ENCODE measurements at regions of chr3 and their contacts with region 1.

Region 1: DNA sequence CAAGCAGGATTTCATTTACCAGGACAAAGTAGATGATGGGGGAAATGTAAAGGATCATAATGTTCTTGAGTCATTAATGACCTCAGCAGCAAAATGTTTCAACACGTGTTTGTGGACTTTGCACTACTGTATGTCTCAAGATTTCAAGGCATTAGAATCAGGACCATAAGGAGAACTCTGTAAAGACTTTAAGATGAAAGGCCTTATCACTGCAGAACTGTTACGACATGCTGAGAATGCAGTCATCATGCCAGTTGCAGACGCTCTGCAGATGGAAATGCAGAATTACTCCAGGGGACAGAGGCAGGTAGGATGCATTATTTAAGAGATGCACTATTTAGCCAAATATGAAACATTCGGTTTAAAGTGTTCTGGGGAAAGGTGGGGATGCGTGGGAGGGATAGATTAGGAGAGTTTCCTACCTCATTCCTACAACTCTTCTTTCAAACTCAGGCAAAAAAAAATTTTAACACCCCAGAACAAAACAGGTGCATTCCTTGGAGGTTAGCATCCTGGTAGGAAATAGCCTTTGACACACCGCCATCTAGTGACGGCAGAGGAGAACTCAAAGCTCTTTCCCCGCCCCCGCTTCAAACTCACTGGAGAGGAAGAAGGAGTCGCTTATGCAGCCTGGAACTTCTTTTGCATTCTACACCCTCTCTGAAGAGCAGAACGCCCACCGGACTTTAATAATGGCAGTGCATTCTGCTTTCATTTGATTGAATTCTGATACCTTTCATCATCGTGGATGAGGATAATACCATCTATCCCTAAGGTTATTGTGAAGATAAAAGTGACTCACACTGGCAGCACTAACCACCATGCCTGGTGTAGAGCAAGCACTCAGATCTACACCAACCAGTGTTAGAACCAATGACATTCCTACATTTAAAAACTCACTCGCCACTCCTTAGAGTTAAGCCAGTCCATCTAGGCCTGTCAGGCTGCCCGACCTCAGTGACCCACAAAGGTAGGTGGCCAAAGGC is 43.1 kb upstream of the TOPAZ1 start:
- DNase-seq: peak; percentile 26
- ATAC-seq: peak; percentile 96
- H3K4me3 ChIP-seq: no peak overlapping the region
- H3K27ac ChIP-seq: no peak overlapping the region
- H3K4me1 ChIP-seq: no peaks in the 10 kb centered on the region
- H3K27me3 ChIP-seq: no peaks in the 10 kb centered on the region; a peak in 2 of 4 replicates
- CTCF ChIP-seq: peak; percentile 82 to 90 (median 83)
- EP300 ChIP-seq: no peak
- POLR2A ChIP-seq: no peak
- RAD21 ChIP-seq: peak; percentile 97

Region 2: DNA sequence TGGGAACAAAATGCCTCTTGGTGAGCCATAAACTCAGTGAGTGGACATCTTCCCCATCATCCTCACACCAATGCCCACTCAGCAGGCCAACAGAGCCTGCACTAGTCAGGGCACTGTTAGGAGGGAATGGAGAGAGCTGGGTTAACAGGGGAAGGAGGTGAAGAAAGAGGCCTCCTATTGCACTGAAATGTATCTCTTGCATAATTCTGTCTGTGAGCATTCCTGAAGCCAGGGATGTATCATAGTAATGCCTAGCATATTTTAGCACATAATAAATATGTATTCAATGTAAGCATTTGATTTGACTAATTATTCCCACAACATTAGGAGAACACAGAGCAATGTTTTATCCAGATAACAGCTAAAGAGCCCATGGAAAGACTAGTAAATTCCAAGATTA is 658.0 kb before region 1 on chr3:
- CTCF ChIA-PET with region 1: interaction called, 5 read pairs
- POLR2A ChIA-PET with region 1: no interaction called
- RAD21 ChIA-PET with region 1: no interaction called
- SMC1A ChIA-PET with region 1: no interaction called
- in situ Hi-C with region 1: loop called (anchors 10 kb)
- intact Hi-C with region 1: loop called (anchors 1 kb)
- DNase-seq: no peak
- ATAC-seq: no peak
- H3K4me3 ChIP-seq: no peak overlapping the region
- H3K27ac ChIP-seq: no peak overlapping the region
- H3K4me1 ChIP-seq: no peaks in the 10 kb centered on the region
- H3K27me3 ChIP-seq: no peaks in the 10 kb centered on the region
- CTCF ChIP-seq: no peak
- EP300 ChIP-seq: no peak
- POLR2A ChIP-seq: no peak
- RAD21 ChIP-seq: no peak

Region 3: GRCh38 chr3:43690400-43691119 is 508.0 kb before region 1 on chr3 and contains the start of gene ABHD5:
- CTCF ChIA-PET with region 1: no interaction called
- POLR2A ChIA-PET with region 1: no interaction called
- RAD21 ChIA-PET with region 1: no interaction called
- SMC1A ChIA-PET with region 1: no interaction called
- in situ Hi-C with region 1: no loop called
- intact Hi-C with region 1: loop called (anchors 5 kb)
- DNase-seq: peak; percentile 82
- ATAC-seq: peak; percentile 91
- H3K4me3 ChIP-seq: peak within 1 kb of the TSS; percentile 90
- H3K27ac ChIP-seq: peak within 1 kb of the TSS; percentile 47
- H3K4me1 ChIP-seq: 0 out of 2 replicates have a peak, but pooled peaks cover 8% of the 10 kb centered on the region
- H3K27me3 ChIP-seq: no peaks in the 10 kb centered on the region
- CTCF ChIP-seq: peak; percentile 20 to 37 (median 35); a peak in 3 of 6 replicates
- EP300 ChIP-seq: 0 out of 4 replicates have a peak, but pooled peaks of 1 of the 2 experiments have one; percentile 9
- POLR2A ChIP-seq: peak; percentile 99
- RAD21 ChIP-seq: 0 out of 2 replicates have a peak, but pooled peaks have one; percentile 7
- polyA plus RNA-seq, gene ABHD5: 5.5 to 6.8 TPM

Region 4: GRCh38 chr3:43769471-43770425 is 428.8 kb before region 1 on chr3:
- CTCF ChIA-PET with region 1: interaction called, 24 read pairs
- POLR2A ChIA-PET with region 1: no interaction called
- RAD21 ChIA-PET with region 1: interaction called, 5 read pairs
- SMC1A ChIA-PET with region 1: interaction called, 6 read pairs
- in situ Hi-C with region 1: loop called (anchors 5 kb)
- intact Hi-C with region 1: loop called (anchors 1 kb)
- DNase-seq: peak; percentile 15
- ATAC-seq: peak; percentile 84
- H3K4me3 ChIP-seq: no peak overlapping the region
- H3K27ac ChIP-seq: no peak overlapping the region
- H3K4me1 ChIP-seq: no peaks in the 10 kb centered on the region
- H3K27me3 ChIP-seq: no peaks in the 10 kb centered on the region; a peak in 3 of 4 replicates
- CTCF ChIP-seq: peak; percentile 72 to 95 (median 93)
- EP300 ChIP-seq: no peak
- POLR2A ChIP-seq: no peak
- RAD21 ChIP-seq: peak; percentile 57

Region 5: GRCh38 chr3:43855674-43856299 is 342.8 kb before region 1 on chr3:
- CTCF ChIA-PET with region 1: interaction called, 50 read pairs
- POLR2A ChIA-PET with region 1: no interaction called
- RAD21 ChIA-PET with region 1: interaction called, 13 read pairs
- SMC1A ChIA-PET with region 1: interaction called, 16 read pairs
- in situ Hi-C with region 1: loop called (anchors 5 kb)
- intact Hi-C with region 1: loop called (anchors 2 kb)
- DNase-seq: peak; percentile 3
- ATAC-seq: peak; percentile 97
- H3K4me3 ChIP-seq: no peak overlapping the region
- H3K27ac ChIP-seq: no peak overlapping the region
- H3K4me1 ChIP-seq: no peaks in the 10 kb centered on the region
- H3K27me3 ChIP-seq: peaks cover 4 to 7% of the 10 kb centered on the region in 2 experiments
- CTCF ChIP-seq: peak; percentile 79 to 80 (median 80)
- EP300 ChIP-seq: no peak
- POLR2A ChIP-seq: no peak
- RAD21 ChIP-seq: peak; percentile 75

Region 6: DNA sequence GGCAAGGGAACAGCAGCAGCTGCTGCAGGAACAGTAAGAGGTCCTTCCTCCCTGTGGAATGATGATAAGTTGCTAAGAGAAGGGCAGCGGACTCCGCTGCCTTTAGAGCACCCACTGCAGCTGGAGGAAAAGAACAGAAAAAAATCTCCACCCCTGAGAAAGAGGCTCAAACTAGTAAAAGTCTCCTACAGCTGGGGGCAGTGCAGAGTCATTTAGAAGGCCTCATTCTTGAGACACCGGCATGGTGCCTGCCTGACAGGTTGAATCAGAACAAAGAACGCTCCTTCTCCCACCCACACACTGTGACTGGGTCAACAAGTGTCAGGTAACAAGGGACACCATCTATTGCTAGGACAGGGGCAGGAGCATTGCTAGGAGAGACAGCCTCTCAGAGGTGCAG is 319.4 kb before region 1 on chr3:
- CTCF ChIA-PET with region 1: interaction called, 8 read pairs
- POLR2A ChIA-PET with region 1: no interaction called
- RAD21 ChIA-PET with region 1: interaction called, 5 read pairs
- SMC1A ChIA-PET with region 1: interaction called, 8 read pairs
- in situ Hi-C with region 1: no loop called
- intact Hi-C with region 1: loop called (anchors 1 kb)
- DNase-seq: no peak
- ATAC-seq: peak; percentile 88
- H3K4me3 ChIP-seq: no peak overlapping the region
- H3K27ac ChIP-seq: no peak overlapping the region
- H3K4me1 ChIP-seq: no peaks in the 10 kb centered on the region; the same call in 1 of the 2 replicates
- H3K27me3 ChIP-seq: peaks cover 2 to 7% of the 10 kb centered on the region in 2 experiments; a peak in 1 of 4 replicates
- CTCF ChIP-seq: peak; percentile 52 to 57 (median 55)
- EP300 ChIP-seq: no peak
- POLR2A ChIP-seq: no peak
- RAD21 ChIP-seq: peak; percentile 80

Region 7: DNA sequence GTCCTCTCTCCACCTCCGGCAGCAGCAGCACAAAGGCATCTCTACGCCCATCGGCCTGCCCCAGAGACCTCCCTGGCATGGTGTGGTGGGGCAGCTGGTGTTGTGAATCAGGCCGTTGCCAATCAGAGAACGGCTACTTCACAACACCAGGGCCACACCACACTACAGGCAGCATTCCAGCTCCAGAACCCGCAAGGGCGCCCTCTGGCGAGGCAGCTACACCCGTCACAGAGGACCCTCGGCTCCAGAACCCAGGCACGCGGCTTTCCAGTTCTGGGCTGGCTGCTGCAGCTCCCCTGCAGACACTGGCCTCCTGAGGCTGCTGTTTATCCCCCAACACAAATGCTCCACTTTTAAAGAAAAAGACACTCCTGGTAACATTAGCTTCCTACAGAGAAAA is 84.4 kb before region 1 on chr3:
- CTCF ChIA-PET with region 1: interaction called, 11 read pairs
- POLR2A ChIA-PET with region 1: no interaction called
- RAD21 ChIA-PET with region 1: no interaction called
- SMC1A ChIA-PET with region 1: interaction called, 4 read pairs
- in situ Hi-C with region 1: no loop called
- intact Hi-C with region 1: no loop called
- DNase-seq: no peak
- ATAC-seq: peak; percentile 96
- H3K4me3 ChIP-seq: no peak overlapping the region
- H3K27ac ChIP-seq: no peak overlapping the region
- H3K4me1 ChIP-seq: no peaks in the 10 kb centered on the region
- H3K27me3 ChIP-seq: no peaks in the 10 kb centered on the region
- CTCF ChIP-seq: peak; percentile 59 to 68 (median 59)
- EP300 ChIP-seq: no peak
- POLR2A ChIP-seq: no peak
- RAD21 ChIP-seq: peak; percentile 63

Region 8: GRCh38 chr3:44264146-44264545 is 65.6 kb after region 1 on chr3:
- CTCF ChIA-PET with region 1: no interaction called
- POLR2A ChIA-PET with region 1: no interaction called
- RAD21 ChIA-PET with region 1: no interaction called
- SMC1A ChIA-PET with region 1: no interaction called
- in situ Hi-C with region 1: no loop called
- intact Hi-C with region 1: no loop called
- DNase-seq: no peak
- ATAC-seq: no peak
- H3K4me3 ChIP-seq: no peak overlapping the region
- H3K27ac ChIP-seq: no peak overlapping the region
- H3K4me1 ChIP-seq: no peaks in the 10 kb centered on the region
- H3K27me3 ChIP-seq: no peaks in the 10 kb centered on the region
- CTCF ChIP-seq: no peak
- EP300 ChIP-seq: no peak
- POLR2A ChIP-seq: no peak
- RAD21 ChIP-seq: no peak